Caco-2 (cell line): ENCODE measurements at regions of chr3 and their contacts with region 1.

Region 1: GRCh38 chr3:132029182-132029902 is 5.5 kb downstream of the CPNE4 start:
- DNase-seq: peak; percentile 90 to 92
- H3K4me3 ChIP-seq: no peak overlapping the region
- H3K4me3 Mint-ChIP-seq: no peak overlapping the region
- H3K27ac Mint-ChIP-seq: no peak overlapping the region
- H3K4me1 ChIP-seq: peaks cover 3% of the 10 kb centered on the region; the same call in 1 of the 2 replicates
- H3K4me1 Mint-ChIP-seq: no peaks in the 10 kb centered on the region
- H3K27me3 ChIP-seq: no peaks in the 10 kb centered on the region
- H3K27me3 Mint-ChIP-seq: peaks cover 19% of the 10 kb centered on the region
- CTCF ChIP-seq: peak; percentile 82 to 91

Region 2: GRCh38 chr3:131794766-131795388 is 234.5 kb before region 1 on chr3:
- CTCF ChIA-PET with region 1: interaction called, 5 read pairs
- POLR2A ChIA-PET with region 1: no interaction called
- intact Hi-C with region 1: loop called (anchors 1 kb)
- DNase-seq: peak; percentile 33 to 59
- H3K4me3 ChIP-seq: no peak overlapping the region
- H3K4me3 Mint-ChIP-seq: no peak overlapping the region
- H3K27ac Mint-ChIP-seq: no peak overlapping the region
- H3K4me1 ChIP-seq: no peaks in the 10 kb centered on the region; the same call in 1 of the 2 replicates
- H3K4me1 Mint-ChIP-seq: no peaks in the 10 kb centered on the region
- H3K27me3 ChIP-seq: no peaks in the 10 kb centered on the region
- H3K27me3 Mint-ChIP-seq: peaks cover 2% of the 10 kb centered on the region
- CTCF ChIP-seq: peak; percentile 68 to 80

Region 3: GRCh38 chr3:131892331-131892730 is 137.0 kb before region 1 on chr3:
- CTCF ChIA-PET with region 1: no interaction called
- POLR2A ChIA-PET with region 1: no interaction called
- intact Hi-C with region 1: loop called (anchors 10 kb)
- DNase-seq: no peak
- H3K4me3 ChIP-seq: no peak overlapping the region
- H3K4me3 Mint-ChIP-seq: no peak overlapping the region
- H3K27ac Mint-ChIP-seq: no peak overlapping the region
- H3K4me1 ChIP-seq: no peaks in the 10 kb centered on the region
- H3K4me1 Mint-ChIP-seq: no peaks in the 10 kb centered on the region
- H3K27me3 ChIP-seq: no peaks in the 10 kb centered on the region
- H3K27me3 Mint-ChIP-seq: peaks cover 9% of the 10 kb centered on the region
- CTCF ChIP-seq: no peak

Region 4: DNA sequence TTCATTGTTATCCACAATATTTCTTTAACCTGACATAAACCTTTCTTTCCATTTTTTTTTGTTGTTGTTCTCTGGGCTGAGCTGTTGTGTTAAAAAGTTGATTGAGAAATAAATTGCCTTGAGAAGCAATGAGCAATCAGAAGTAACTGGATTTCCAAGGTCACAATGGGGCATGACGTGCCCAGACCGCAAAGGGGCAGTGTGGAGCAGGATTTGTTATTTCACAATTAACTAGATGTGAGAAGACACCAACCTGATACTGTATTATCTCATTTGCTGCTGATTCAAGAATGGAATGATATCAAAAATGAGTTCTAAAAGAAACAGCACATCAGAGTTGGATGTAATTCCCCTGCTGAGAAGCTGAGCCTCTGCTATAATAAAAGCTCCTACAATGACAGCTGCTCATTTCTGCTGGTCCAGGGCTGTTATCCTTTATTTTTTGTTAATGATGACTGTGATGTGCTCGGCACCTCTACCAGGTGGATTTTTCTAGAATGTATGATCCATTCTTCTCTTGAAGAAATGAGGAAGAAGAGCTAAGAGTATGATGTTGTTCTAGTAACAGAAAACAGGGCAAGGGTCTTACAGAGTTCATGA is 22.6 kb before region 1 on chr3:
- CTCF ChIA-PET with region 1: interaction called, 3 read pairs
- POLR2A ChIA-PET with region 1: no interaction called
- intact Hi-C with region 1: loop called (anchors 1 kb)
- DNase-seq: peak; percentile 35 to 50
- H3K4me3 ChIP-seq: no peak overlapping the region
- H3K4me3 Mint-ChIP-seq: no peak overlapping the region
- H3K27ac Mint-ChIP-seq: no peak overlapping the region
- H3K4me1 ChIP-seq: no peaks in the 10 kb centered on the region
- H3K4me1 Mint-ChIP-seq: no peaks in the 10 kb centered on the region
- H3K27me3 ChIP-seq: no peaks in the 10 kb centered on the region
- H3K27me3 Mint-ChIP-seq: peaks cover 8% of the 10 kb centered on the region
- CTCF ChIP-seq: peak; percentile 44 to 76

Region 5: GRCh38 chr3:132464066-132464465 is 434.7 kb after region 1 on chr3:
- CTCF ChIA-PET with region 1: no interaction called
- POLR2A ChIA-PET with region 1: no interaction called
- intact Hi-C with region 1: no loop called
- DNase-seq: no peak
- H3K4me3 ChIP-seq: no peak overlapping the region
- H3K4me3 Mint-ChIP-seq: no peak overlapping the region
- H3K27ac Mint-ChIP-seq: no peak overlapping the region
- H3K4me1 ChIP-seq: no peaks in the 10 kb centered on the region
- H3K4me1 Mint-ChIP-seq: no peaks in the 10 kb centered on the region
- H3K27me3 ChIP-seq: no peaks in the 10 kb centered on the region
- H3K27me3 Mint-ChIP-seq: no peaks in the 10 kb centered on the region
- CTCF ChIP-seq: no peak